Caco-2 (cell line): ENCODE measurements at regions of chr1 and their contacts with region 1.

Region 1: GRCh38 chr1:110338886-110339406 is at the start of gene RBM15:
- DNase-seq: peak; percentile 95 to 97
- H3K4me3 ChIP-seq: peak within 1 kb of the TSS; percentile 92
- H3K4me3 Mint-ChIP-seq: no peak within 1 kb of the TSS
- H3K27ac Mint-ChIP-seq: no peak within 1 kb of the TSS
- H3K4me1 ChIP-seq: peaks cover 18% of the 10 kb centered on the region; the same call in 1 of the 2 replicates
- H3K4me1 Mint-ChIP-seq: peaks cover 15% of the 10 kb centered on the region
- H3K27me3 ChIP-seq: no peaks in the 10 kb centered on the region
- H3K27me3 Mint-ChIP-seq: no peaks in the 10 kb centered on the region
- CTCF ChIP-seq: no peak
- total RNA-seq, gene RBM15: 34.3 and 36.1 TPM in 2 replicates

Region 2: GRCh38 chr1:110390692-110391245 is 51.8 kb after region 1 on chr1 and contains the start of gene SLC16A4:
- CTCF ChIA-PET with region 1: interaction called, 4 read pairs
- POLR2A ChIA-PET with region 1: interaction called, 4 read pairs
- intact Hi-C with region 1: loop called (anchors 5 kb)
- DNase-seq: peak; percentile 45 to 54
- H3K4me3 ChIP-seq: peak within 1 kb of the TSS; percentile 11; the same call in 1 of the 2 replicates
- H3K4me3 Mint-ChIP-seq: peak within 1 kb of the TSS; percentile 58
- H3K27ac Mint-ChIP-seq: peak within 1 kb of the TSS; percentile 46
- H3K4me1 ChIP-seq: peaks cover 47% of the 10 kb centered on the region
- H3K4me1 Mint-ChIP-seq: peaks cover 19% of the 10 kb centered on the region
- H3K27me3 ChIP-seq: no peaks in the 10 kb centered on the region
- H3K27me3 Mint-ChIP-seq: no peaks in the 10 kb centered on the region
- CTCF ChIP-seq: no peak
- total RNA-seq, gene SLC16A4: 7.6 and 9.3 TPM in 2 replicates

Region 3: DNA sequence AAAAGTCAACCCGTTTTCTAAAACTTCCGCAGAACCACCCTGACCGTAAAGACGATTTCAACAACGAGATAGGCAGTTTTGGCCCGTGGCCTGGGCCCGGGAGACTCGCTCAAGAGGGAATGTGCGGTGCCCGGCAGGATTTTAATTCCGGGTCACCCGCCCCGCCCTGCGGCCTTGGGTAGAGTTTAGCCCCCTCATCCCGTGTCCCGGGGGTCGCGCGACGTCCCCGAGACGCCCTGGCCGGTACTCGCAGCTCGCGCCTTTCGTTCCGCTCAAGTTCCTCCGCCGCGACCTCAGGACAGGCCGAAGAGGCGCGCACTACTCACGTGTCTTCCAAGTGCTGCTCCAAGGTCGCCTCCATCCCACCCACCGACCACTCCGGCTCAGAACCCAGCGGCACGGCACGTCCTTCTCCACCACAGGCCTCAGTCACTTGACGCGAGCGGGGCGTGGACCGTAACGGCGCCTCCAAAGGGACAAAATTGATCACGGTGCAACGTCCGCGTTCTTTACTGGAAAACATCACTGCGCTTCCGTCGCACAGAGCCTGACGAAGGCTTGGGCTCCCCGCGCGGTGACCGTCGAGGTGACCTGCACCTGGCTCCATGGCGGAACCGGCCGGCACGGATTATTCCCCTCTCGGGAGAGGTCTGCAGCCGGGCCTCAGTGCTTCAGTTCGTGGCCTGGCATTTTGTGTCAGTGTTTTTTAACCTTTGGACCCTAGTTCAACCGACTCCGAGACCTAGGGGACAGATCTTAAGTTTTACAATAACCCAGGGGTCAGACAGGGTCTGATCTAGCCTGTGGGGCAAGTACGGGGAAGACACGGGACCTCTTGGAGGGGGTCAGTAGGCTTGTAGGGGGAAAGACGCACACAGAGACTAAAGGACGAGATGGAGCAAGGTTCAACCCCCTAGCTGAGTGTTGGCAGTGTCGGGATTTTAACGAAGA is 68.6 kb after region 1 on chr1 and contains the start of gene LAMTOR5:
- CTCF ChIA-PET with region 1: interaction called, 10 read pairs
- POLR2A ChIA-PET with region 1: interaction called, 4 read pairs
- intact Hi-C with region 1: loop called (anchors 1 kb)
- DNase-seq: peak; percentile 90 to 91
- H3K4me3 ChIP-seq: peak within 1 kb of the TSS; percentile 65
- H3K4me3 Mint-ChIP-seq: peak within 1 kb of the TSS; percentile 96
- H3K27ac Mint-ChIP-seq: peak within 1 kb of the TSS; percentile 97
- H3K4me1 ChIP-seq: peaks cover 7% of the 10 kb centered on the region
- H3K4me1 Mint-ChIP-seq: peaks cover 3% of the 10 kb centered on the region
- H3K27me3 ChIP-seq: no peaks in the 10 kb centered on the region
- H3K27me3 Mint-ChIP-seq: no peaks in the 10 kb centered on the region
- CTCF ChIP-seq: no peak
- total RNA-seq, gene LAMTOR5: 104 and 106 TPM in 2 replicates

Region 4: GRCh38 chr1:110412576-110412975 is 73.6 kb after region 1 on chr1:
- CTCF ChIA-PET with region 1: interaction called, 10 read pairs
- POLR2A ChIA-PET with region 1: interaction called, 4 read pairs
- intact Hi-C with region 1: loop called (anchors 1 kb)
- DNase-seq: peak; percentile 65 to 74
- H3K4me3 ChIP-seq: no peak overlapping the region
- H3K4me3 Mint-ChIP-seq: no peak overlapping the region
- H3K27ac Mint-ChIP-seq: no peak overlapping the region
- H3K4me1 ChIP-seq: peaks cover 7% of the 10 kb centered on the region; the same call in 1 of the 2 replicates
- H3K4me1 Mint-ChIP-seq: peaks cover 7% of the 10 kb centered on the region
- H3K27me3 ChIP-seq: no peaks in the 10 kb centered on the region
- H3K27me3 Mint-ChIP-seq: no peaks in the 10 kb centered on the region
- CTCF ChIP-seq: peak; percentile 65 to 75